K562 (cell line): ENCODE measurements at regions of chr1 and their contacts with region 1.

Region 1: GRCh38 chr1:156146020-156146768 is 7.2 kb upstream of the SEMA4A start:
- DNase-seq: peak; percentile 66 to 80 (median 72)
- ATAC-seq: peak; percentile 87
- H3K4me3 ChIP-seq: no peak overlapping the region
- H3K27ac ChIP-seq: no peak overlapping the region
- H3K4me1 ChIP-seq: peaks cover 5 to 13% of the 10 kb centered on the region in 2 experiments; a peak in 4 of 5 replicates
- H3K27me3 ChIP-seq: peaks cover 3 to 8% of the 10 kb centered on the region in 2 experiments; a peak in 1 of 5 replicates
- CTCF ChIP-seq: peak; percentile 78 to 93 (median 82)
- EP300 ChIP-seq: 0 out of 2 replicates have a peak, but pooled peaks have one; percentile 10
- POLR2A ChIP-seq: no peak
- RAD21 ChIP-seq: peak; percentile 86 to 94

Region 2: GRCh38 chr1:156193488-156194299 is 47.5 kb after region 1 on chr1 and contains the start of gene SLC25A44:
- CTCF ChIA-PET with region 1: no interaction called
- POLR2A ChIA-PET with region 1: interaction called, 3 read pairs
- in situ Hi-C with region 1: no loop called
- intact Hi-C with region 1: loop called (anchors 5 kb)
- DNase-seq: peak; percentile 95 to 99 (median 96)
- ATAC-seq: peak; percentile 99
- H3K4me3 ChIP-seq: peak within 1 kb of the TSS; percentile 71
- H3K27ac ChIP-seq: peak within 1 kb of the TSS; percentile 82
- H3K4me1 ChIP-seq: peaks cover 6 to 12% of the 10 kb centered on the region in 2 experiments
- H3K27me3 ChIP-seq: no peaks in the 10 kb centered on the region
- CTCF ChIP-seq: peak; percentile 61 to 68 (median 61)
- EP300 ChIP-seq: 0 out of 2 replicates have a peak, but pooled peaks have one; percentile 12
- POLR2A ChIP-seq: peak; percentile 90
- RAD21 ChIP-seq: no peak
- polyA plus RNA-seq, gene SLC25A44: 4.4 to 7.5 TPM

Region 3: DNA sequence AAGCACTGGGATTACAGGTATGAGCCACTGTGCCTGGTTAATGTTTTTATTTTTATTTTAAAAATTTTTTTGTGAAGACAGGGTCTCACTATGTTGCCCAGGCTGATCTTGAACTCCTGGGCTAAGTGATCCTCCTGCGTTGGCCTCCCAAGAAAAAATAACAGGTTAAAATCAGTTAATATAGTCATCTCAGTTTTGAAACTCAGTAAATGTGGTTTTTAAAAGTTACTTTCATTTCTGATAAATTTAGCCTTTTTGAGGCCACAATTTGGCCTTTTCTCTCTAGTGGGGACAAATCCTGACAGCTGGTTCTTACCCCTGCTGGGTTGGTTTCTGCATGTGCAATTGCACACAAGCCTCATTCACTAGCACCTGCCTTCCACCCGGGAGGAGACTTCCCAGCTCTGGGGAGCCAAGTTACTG is 79.9 kb after region 1 on chr1:
- CTCF ChIA-PET with region 1: interaction called, 44 read pairs
- POLR2A ChIA-PET with region 1: interaction called, 7 read pairs
- in situ Hi-C with region 1: loop called (anchors 5 kb)
- intact Hi-C with region 1: loop called (anchors 2 kb)
- DNase-seq: no peak
- ATAC-seq: no peak
- H3K4me3 ChIP-seq: no peak overlapping the region
- H3K27ac ChIP-seq: no peak overlapping the region
- H3K4me1 ChIP-seq: peaks cover 3 to 7% of the 10 kb centered on the region in 2 experiments; a peak in 3 of 5 replicates
- H3K27me3 ChIP-seq: no peaks in the 10 kb centered on the region
- CTCF ChIP-seq: no peak
- EP300 ChIP-seq: no peak
- POLR2A ChIP-seq: no peak
- RAD21 ChIP-seq: no peak

Region 4: DNA sequence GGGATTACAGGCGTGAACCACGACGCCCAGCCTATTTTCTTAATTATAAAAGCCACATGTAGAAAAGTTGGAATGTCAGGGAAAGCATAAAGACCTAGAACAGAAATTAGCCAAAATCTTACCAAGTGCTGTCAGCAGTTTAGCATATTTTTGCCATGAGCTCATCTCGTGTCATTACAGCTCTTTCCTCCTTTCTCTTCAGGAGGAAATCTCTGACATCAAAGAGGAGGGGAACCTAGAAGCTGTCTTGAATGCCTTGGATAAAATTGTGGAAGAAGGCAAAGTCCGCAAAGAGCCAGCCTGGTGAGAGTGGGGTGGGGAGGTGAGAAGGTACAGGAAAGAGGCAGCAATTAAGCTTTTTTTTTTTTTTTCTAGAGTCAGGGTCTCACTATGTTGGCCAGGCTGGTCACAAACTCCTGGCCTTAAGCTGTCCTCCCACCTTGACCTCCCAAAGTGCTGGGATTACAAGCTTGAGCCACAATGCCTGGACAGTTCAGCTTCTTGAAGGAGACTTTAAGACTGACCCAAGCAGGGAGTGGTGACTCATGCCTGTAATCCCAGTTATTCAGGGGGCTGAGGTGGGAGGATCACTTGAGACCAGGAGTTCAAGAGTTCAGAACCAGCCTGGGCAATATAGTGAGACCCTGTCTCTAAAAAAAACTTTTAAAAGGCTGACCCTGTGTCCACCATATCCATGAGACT is 87.4 kb after region 1 on chr1:
- CTCF ChIA-PET with region 1: no interaction called
- POLR2A ChIA-PET with region 1: interaction called, 4 read pairs
- in situ Hi-C with region 1: loop called (anchors 5 kb)
- intact Hi-C with region 1: no loop called
- DNase-seq: peak in 1 of 4 experiments; percentile 18
- ATAC-seq: no peak
- H3K4me3 ChIP-seq: no peak overlapping the region
- H3K27ac ChIP-seq: no peak overlapping the region
- H3K4me1 ChIP-seq: peaks cover 9 to 18% of the 10 kb centered on the region in 2 experiments; a peak in 4 of 5 replicates
- H3K27me3 ChIP-seq: no peaks in the 10 kb centered on the region
- CTCF ChIP-seq: no peak
- EP300 ChIP-seq: no peak
- POLR2A ChIP-seq: no peak
- RAD21 ChIP-seq: no peak

Region 5: DNA sequence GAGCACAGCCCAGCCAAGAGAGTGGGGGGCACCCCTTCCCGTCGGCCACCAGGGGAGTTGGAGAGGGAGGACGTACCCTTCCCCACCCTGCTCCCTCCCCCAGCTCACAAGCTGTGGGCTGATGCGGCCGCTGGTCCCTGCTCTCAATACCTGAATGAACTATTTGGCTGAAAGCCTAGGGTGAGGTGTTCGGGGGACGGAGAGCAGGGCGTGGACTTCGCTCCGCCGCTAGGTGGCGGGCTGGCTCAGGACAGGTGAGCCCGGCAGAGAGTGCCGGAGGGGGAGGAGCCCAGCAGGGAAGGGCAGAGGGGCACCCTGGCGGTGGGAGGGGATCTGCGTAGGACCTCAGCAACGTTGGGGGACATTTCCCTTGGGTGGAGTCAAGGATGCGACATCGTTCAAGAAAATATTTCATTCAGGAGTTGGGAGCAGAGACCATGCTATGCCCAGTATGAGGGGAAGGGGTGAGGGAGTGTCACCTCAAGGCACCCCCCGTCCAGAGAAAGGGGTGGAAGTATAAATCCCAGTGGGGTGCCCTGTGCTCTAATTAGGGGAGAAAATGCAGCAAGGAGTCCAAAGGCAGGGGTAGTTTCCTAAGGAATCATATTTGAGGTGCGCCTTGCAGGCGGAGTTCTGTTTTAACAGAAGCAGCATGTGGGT is 210.8 kb after region 1 on chr1:
- CTCF ChIA-PET with region 1: interaction called, 3 read pairs
- POLR2A ChIA-PET with region 1: no interaction called
- in situ Hi-C with region 1: no loop called
- intact Hi-C with region 1: loop called (anchors 2 kb)
- DNase-seq: peak; percentile 74 to 89 (median 82)
- ATAC-seq: peak; percentile 98
- H3K4me3 ChIP-seq: no peak overlapping the region
- H3K27ac ChIP-seq: no peak overlapping the region
- H3K4me1 ChIP-seq: peaks cover 0 to 6% of the 10 kb centered on the region in 2 experiments; a peak in 2 of 5 replicates
- H3K27me3 ChIP-seq: peaks cover 20 to 22% of the 10 kb centered on the region in 2 experiments
- CTCF ChIP-seq: peak; percentile 75 to 90 (median 80)
- EP300 ChIP-seq: no peak
- POLR2A ChIP-seq: no peak
- RAD21 ChIP-seq: peak; percentile 37 to 57; a peak in 3 of 4 replicates